ENCODE measurements at regions of chr4 and their contacts with region 1.

Region 1: GRCh38 chr4:140252742-140253555 is 99.0 kb upstream of the MAML3 start:
- DNase-seq: peak; percentile 32
- H3K4me3 Mint-ChIP-seq: peak overlapping the region; percentile 76
- H3K27ac Mint-ChIP-seq: peak overlapping the region; percentile 59
- H3K4me1 Mint-ChIP-seq: peaks cover 28% of the 10 kb centered on the region
- H3K27me3 Mint-ChIP-seq: peaks cover 36% of the 10 kb centered on the region

Region 2: DNA sequence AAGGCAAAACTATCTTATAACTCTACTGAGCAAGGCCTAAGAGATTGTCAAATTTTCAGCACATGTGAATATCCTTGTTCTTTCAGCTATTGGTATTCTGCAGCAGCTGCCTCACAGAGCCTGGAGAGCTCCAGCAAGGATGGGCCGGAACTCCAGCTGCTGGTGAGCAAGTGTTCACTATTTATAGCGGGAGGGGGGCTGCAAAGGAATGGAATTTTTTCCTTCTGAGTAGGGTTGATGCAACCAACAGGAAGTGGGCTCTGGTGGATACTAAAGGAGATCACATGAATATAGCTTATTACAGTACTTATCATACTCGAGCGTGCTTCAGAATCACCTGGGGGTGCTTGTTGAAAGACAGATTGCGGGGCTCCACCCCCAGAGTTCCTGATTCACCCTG is 676.7 kb before region 1 on chr4:
- intact Hi-C with region 1: no loop called
- DNase-seq: no peak
- H3K4me3 Mint-ChIP-seq: no peak overlapping the region
- H3K27ac Mint-ChIP-seq: no peak overlapping the region
- H3K4me1 Mint-ChIP-seq: no peaks in the 10 kb centered on the region
- H3K27me3 Mint-ChIP-seq: peaks cover 28% of the 10 kb centered on the region

Region 3: DNA sequence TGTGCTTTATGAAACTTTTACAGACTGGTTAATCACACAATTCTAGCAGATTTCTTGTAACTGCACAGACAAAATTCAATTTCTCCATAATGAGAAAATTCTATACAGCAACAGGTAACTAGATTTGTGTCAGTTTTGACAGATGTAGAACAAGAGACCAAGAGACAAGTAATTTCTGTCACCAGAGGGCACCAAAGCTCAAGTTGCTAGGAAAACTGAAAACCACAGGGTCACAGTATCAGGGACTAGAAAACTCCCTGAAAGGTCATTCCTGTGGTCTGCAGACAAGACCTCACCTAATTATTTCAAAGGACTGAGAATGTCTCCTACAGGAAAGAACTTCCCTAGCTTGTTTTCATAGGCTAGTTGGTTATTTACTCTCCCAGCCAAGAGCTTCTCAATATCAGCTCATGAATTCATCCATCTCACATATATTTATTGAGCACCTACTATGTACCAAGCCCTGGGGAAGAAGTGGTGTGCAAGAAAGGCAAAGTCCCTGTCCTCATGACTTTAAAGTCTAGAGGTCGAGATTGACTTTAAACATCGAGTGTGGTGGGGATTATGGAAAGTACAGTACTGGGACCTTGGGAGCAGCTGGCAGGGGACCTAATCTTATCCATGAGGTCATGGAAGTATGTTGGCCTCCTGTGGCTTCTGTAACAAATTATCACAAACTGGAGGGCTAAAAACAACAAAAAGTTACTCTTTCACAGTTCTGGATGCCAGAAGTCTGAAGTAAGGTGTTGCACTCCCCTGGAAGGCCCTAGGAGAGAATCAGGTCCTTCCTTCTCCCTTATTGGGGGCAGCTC is 649.2 kb before region 1 on chr4:
- intact Hi-C with region 1: loop called (anchors 1 kb)
- DNase-seq: peak; percentile 9
- H3K4me3 Mint-ChIP-seq: no peak overlapping the region
- H3K27ac Mint-ChIP-seq: no peak overlapping the region
- H3K4me1 Mint-ChIP-seq: peaks cover 15% of the 10 kb centered on the region
- H3K27me3 Mint-ChIP-seq: peaks cover 2% of the 10 kb centered on the region

Region 4: DNA sequence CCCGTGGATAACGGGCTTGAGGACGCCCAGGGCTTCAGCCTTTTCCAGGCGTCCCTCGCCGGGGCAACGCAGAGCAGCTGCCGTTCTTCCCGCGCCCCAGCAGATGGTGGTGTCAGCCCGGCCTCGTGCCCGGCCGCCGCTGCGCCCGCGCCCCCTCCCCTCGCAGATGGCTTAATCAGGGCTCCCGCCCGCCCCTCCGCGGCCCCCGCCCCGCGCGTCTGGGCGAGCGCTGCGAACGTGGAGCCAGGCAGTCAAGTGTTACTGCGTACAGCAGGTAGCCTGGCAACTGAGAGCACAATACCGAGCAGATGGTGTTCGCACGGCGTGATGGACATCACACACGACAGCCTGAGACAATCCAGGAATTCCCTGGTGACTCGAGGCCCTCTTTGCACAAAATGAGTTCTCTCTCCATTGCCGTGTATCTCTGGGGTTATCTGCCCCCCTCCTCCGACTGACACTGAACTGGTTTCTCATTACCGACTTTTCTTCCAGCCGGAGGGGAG is 518.0 kb before region 1 on chr4:
- intact Hi-C with region 1: loop called (anchors 1 kb)
- DNase-seq: peak; percentile 42
- H3K4me3 Mint-ChIP-seq: peak overlapping the region; percentile 66
- H3K27ac Mint-ChIP-seq: no peak overlapping the region
- H3K4me1 Mint-ChIP-seq: peaks cover 6% of the 10 kb centered on the region
- H3K27me3 Mint-ChIP-seq: peaks cover 45% of the 10 kb centered on the region

Region 5: GRCh38 chr4:139858436-139859225 is 394.3 kb before region 1 on chr4:
- intact Hi-C with region 1: loop called (anchors 2 kb)
- DNase-seq: no peak
- H3K4me3 Mint-ChIP-seq: no peak overlapping the region
- H3K27ac Mint-ChIP-seq: no peak overlapping the region
- H3K4me1 Mint-ChIP-seq: peaks cover 33% of the 10 kb centered on the region
- H3K27me3 Mint-ChIP-seq: peaks cover 18% of the 10 kb centered on the region

Region 6: GRCh38 chr4:140012688-140013486 is 240.1 kb before region 1 on chr4:
- intact Hi-C with region 1: loop called (anchors 1 kb)
- DNase-seq: peak; percentile 42
- H3K4me3 Mint-ChIP-seq: no peak overlapping the region
- H3K27ac Mint-ChIP-seq: no peak overlapping the region
- H3K4me1 Mint-ChIP-seq: peaks cover 10% of the 10 kb centered on the region
- H3K27me3 Mint-ChIP-seq: peaks cover 40% of the 10 kb centered on the region

Region 7: GRCh38 chr4:140049024-140049848 is 203.7 kb before region 1 on chr4:
- intact Hi-C with region 1: loop called (anchors 1 kb)
- DNase-seq: peak; percentile 11
- H3K4me3 Mint-ChIP-seq: peak overlapping the region; percentile 77
- H3K27ac Mint-ChIP-seq: no peak overlapping the region
- H3K4me1 Mint-ChIP-seq: peaks cover 32% of the 10 kb centered on the region
- H3K27me3 Mint-ChIP-seq: peaks cover 59% of the 10 kb centered on the region

Region 8: DNA sequence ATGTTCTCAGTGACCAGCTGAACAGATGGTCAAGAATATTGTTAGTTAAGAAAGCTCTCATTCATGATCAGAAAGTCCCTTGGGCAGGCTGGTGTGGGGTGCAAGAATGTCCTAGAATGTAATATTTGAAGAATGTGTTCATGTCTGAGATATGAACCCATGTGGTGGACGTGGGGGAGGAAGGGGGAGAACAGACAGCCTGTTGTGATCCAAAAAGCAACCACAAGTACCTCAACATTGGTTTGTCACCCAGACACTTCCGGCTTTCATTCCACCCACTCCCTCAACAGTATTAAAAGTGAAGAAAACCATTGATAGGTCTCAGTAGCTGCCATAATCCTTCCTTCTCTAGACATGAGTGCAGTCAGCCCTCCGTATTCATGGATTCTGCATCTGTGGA is 181.1 kb before region 1 on chr4:
- intact Hi-C with region 1: loop called (anchors 5 kb)
- DNase-seq: peak; percentile 62
- H3K4me3 Mint-ChIP-seq: peak overlapping the region; percentile 71
- H3K27ac Mint-ChIP-seq: peak overlapping the region; percentile 70
- H3K4me1 Mint-ChIP-seq: peaks cover 59% of the 10 kb centered on the region
- H3K27me3 Mint-ChIP-seq: peaks cover 48% of the 10 kb centered on the region

Region 9: GRCh38 chr4:140423106-140423505 is 170.2 kb after region 1 on chr4:
- intact Hi-C with region 1: no loop called
- DNase-seq: no peak
- H3K4me3 Mint-ChIP-seq: no peak overlapping the region
- H3K27ac Mint-ChIP-seq: no peak overlapping the region
- H3K4me1 Mint-ChIP-seq: peaks cover 11% of the 10 kb centered on the region
- H3K27me3 Mint-ChIP-seq: peaks cover 37% of the 10 kb centered on the region

Region 10: DNA sequence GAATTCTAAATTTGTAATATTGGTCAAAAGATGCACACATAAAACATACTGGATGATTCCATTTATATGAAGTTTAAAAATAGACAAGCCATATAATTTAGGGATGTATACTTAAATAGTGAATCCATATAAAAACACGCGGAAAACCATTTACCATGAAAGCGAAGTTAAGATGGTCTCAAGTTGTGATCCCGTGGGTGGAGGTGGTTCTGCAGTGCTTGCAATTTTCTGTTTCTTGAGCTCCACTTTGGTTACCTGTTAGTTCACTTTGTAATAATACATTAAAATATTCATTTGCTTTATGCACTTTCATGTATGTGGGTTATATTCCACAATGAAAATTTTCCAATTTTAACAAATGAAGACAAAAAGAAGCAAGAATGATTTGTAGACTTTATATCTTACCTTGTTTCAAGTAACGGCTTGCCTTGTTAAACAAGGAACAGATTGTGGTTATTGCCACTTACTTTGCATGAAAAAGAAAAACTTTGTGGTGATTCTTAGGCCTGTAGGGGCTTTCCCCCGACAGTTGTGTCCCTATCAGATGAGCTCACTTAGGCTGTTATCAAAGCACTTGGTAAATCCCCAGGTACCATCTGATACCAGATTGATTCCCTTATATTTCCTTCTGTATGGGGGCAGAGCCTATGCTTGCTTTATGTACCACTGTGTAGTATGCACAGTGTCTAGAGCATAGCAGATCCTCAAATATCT is 303.6 kb after region 1 on chr4:
- intact Hi-C with region 1: no loop called
- DNase-seq: peak; percentile 8
- H3K4me3 Mint-ChIP-seq: no peak overlapping the region
- H3K27ac Mint-ChIP-seq: no peak overlapping the region
- H3K4me1 Mint-ChIP-seq: peaks cover 17% of the 10 kb centered on the region
- H3K27me3 Mint-ChIP-seq: peaks cover 31% of the 10 kb centered on the region

Measured in activated T-helper 1 cell treated with anti-CD3 and anti-CD28 coated beads, Interleukin-12 subunit alpha, Interleukin-12 subunit beta, Interleukin-2, Interleukin-4 antibody, amounts not matched to agents 30 ng/mL and 10 ng/mL and 1 ng/mL, durations not matched to agents 14 hours and 24 hours and 36 hours (primary cell).